ENCODE measurements at regions of chr20 and their contacts with region 1.

Region 1: DNA sequence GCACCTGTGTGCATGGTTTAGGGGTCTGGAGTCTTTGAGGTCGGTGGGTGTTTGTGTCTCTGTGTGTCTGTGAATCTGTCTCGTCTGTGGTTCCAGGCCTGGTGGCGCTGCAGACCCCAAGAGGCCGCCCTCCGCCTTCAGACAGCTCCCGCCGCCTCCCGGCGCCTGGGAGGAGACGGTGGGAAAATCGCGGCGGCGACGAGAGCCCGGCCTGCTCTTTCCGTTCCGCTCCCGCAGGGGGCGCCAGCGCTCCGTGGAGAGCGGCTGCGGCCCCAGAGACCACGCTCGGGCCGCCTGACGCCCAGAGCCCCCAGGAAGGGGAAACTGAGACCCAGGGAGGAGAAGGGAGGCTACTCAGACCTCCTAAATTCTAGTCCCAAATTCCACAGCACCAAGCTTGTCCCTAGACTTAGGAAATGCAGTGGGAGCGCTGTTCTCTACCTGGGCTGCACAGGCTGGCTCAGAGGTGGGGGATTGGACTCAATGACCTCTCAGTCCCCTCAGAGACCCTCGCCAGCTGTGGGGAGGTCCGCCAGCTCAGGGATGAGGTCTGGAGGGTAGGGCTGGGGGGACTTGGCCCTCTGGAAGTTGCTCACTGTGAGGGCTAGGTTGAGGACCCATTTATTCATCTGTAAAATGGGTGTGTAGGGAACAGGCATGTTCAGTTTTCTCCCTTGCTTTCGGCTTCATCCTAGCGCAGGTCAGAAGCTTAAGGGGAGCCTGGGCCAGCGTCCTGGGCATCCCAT is 36.9 kb upstream of the BLCAP start:
- DNase-seq: peak; percentile 44
- H3K4me3 Mint-ChIP-seq: no peak overlapping the region
- H3K27ac Mint-ChIP-seq: no peak overlapping the region
- H3K4me1 Mint-ChIP-seq: no peaks in the 10 kb centered on the region
- H3K27me3 Mint-ChIP-seq: peaks cover 37% of the 10 kb centered on the region

Region 2: DNA sequence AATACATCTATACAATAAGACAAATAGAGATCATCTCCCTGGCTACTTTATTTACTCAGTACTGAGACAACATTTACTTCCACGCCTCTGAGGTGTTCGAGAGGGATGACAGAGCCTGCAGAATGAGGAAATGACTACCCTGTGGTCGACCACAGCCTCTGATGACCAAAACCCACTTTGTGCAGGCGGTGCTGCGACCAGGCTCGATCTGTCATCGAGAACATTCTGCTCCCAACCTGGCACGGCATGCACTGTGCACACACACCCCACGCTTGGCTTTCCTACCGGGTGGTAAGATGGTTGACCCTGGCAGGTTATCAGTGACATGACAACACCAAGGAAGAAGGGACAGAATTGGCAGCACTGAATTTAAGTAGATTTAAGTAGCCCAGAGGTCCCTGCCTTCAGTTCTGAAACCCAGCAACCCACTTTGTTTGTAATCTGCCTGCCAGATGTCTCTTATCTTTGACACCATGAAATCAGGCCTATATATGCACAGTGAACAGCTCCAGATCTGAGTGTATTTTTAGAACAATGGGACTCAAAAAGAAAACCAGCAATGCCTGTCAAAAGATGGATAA is 426.1 kb after region 1 on chr20:
- CTCF ChIA-PET with region 1: interaction called, 20 read pairs
- POLR2A ChIA-PET with region 1: interaction called, 3 read pairs
- DNase-seq: peak; percentile 87
- H3K4me3 Mint-ChIP-seq: no peak overlapping the region
- H3K27ac Mint-ChIP-seq: peak overlapping the region; percentile 81
- H3K4me1 Mint-ChIP-seq: peaks cover 34% of the 10 kb centered on the region
- H3K27me3 Mint-ChIP-seq: no peaks in the 10 kb centered on the region

Measured in activated CD4-positive, alpha-beta memory T cell treated with anti-CD3 and anti-CD28 coated beads, Interleukin-2, amount 10 ng/mL, durations not matched to agents 7 days and 5 days (primary cell).